ENCODE measurements at regions of chr1 and their contacts with region 1.

Region 1: GRCh38 chr1:154998818-154999570 is 3.6 kb upstream of the ZBTB7B start:
- DNase-seq: peak in 1 of 2 donors; percentile 51
- H3K4me3 ChIP-seq: peak overlapping the region in 1 of 3 donors; percentile 86
- H3K27ac ChIP-seq: peak overlapping the region in 2 of 3 donors; percentile 95 to 99
- H3K4me1 ChIP-seq: peaks cover 16 to 18% of the 10 kb centered on the region in 2 donors
- H3K27me3 ChIP-seq: no peaks in the 10 kb centered on the region
- CTCF ChIP-seq: peak; percentile 33 to 70 (median 63)
- POLR2A ChIP-seq: no peak

Region 2: DNA sequence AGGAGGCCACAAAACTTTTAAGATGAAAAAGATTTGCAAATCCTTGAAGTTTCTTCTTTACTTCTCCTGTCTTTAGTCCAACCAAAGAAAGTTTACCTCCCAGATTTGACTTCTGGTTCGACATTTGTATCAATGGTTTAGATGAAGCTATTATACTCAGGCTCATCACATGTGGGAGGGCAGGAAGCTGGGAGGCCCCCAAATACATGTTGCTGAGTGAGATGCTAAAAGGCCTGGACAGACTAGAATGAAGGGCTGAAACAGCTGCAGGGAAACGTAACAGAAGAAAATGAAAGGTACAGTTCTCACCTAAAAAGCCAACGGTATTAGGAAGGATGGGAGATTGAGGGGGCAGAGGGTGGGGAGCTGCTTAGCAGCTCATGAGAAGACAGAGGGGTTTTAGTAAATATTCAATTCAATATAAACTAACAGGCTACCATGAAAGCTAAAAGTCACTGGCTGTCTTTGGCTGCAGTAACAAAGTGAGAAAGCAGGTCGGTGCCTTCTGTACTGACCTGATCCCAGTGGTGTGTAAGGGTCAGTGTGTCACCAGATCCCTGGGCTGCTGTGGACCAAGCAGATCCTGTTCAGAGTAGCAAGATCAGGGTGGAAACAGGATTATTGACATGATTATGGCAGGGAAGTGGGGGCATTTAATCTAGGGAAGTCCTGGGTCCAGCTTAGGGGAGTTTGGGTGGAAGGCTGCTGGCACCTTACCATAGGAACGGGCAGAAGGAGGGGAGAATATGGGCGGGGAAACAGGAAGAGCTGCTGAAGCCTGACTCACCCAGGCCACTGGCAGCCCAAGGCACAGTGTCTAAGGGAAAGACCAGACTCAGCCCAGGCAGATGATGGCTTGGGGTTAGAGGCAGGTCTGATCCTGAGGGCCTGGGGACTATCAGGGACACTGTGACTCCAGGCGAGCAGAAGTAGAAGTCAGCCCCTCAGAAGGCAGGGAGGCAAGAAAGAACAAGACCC is 189.3 kb before region 1 on chr1:
- intact Hi-C with region 1: no loop called
- DNase-seq: peak in 1 of 2 donors; percentile 16
- H3K4me3 ChIP-seq: no peak overlapping the region
- H3K27ac ChIP-seq: peak overlapping the region in 2 of 3 donors; percentile 31 to 34
- H3K4me1 ChIP-seq: peaks cover 5 to 36% of the 10 kb centered on the region in 2 donors
- H3K27me3 ChIP-seq: no peaks in the 10 kb centered on the region
- CTCF ChIP-seq: no peak
- POLR2A ChIP-seq: no peak

Region 3: GRCh38 chr1:154863315-154864174 is 135.4 kb before region 1 on chr1:
- intact Hi-C with region 1: no loop called
- DNase-seq: peak; percentile 22 to 38
- H3K4me3 ChIP-seq: no peak overlapping the region
- H3K27ac ChIP-seq: peak overlapping the region in 1 of 3 donors; percentile 53
- H3K4me1 ChIP-seq: peaks cover 0 to 5% of the 10 kb centered on the region in 2 donors
- H3K27me3 ChIP-seq: no peaks in the 10 kb centered on the region
- CTCF ChIP-seq: peak; percentile 28 to 54 (median 32)
- POLR2A ChIP-seq: no peak

Region 4: DNA sequence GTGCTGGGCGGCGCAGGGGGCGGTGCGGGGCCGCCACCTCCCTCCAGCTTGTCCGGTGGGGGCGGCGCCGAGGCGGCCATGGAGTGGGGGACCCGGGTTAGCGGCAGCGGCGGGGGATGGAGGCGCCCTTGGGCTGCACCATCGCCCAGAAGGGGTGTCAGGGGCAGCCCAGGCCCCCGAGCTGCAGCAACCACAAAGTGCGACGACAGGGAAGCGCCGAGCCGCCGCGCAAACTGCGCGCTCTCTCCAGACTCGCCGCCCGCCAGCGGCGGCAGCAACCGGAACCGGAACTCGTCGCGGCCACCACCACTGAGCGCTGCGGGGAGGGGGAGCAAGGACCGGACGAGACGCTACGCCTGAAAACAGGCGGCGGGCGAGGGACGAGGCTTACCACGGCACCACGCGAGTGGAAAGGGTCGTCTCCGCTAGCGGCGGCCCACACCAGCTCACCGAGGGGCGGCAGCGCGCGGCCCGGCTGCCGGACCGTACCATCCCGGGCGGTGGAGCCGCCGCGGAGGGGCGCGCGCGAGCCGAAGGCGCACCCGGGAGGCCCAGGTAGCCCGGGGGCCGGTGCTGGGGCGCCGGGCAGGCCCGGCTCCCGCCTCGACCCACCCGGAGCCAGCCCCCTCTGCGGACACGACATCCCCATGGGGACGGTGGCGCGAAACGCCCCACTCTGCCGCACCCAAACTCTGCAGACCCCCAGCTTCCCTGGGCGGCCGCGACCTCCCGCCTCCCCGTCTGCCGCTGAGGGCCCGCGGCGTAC is 37.3 kb before region 1 on chr1 and contains the start of gene PYGO2:
- intact Hi-C with region 1: loop called (anchors 5 kb)
- DNase-seq: peak; percentile 82 to 86
- H3K4me3 ChIP-seq: peak within 1 kb of the TSS; percentile 30 to 91 (median 69)
- H3K27ac ChIP-seq: peak within 1 kb of the TSS; percentile 94 to 100 (median 97)
- H3K4me1 ChIP-seq: peaks cover 40 to 49% of the 10 kb centered on the region in 2 donors
- H3K27me3 ChIP-seq: no peaks in the 10 kb centered on the region
- CTCF ChIP-seq: peak in 4 of 6 experiments; percentile 36 to 86 (median 70)
- POLR2A ChIP-seq: peak in 1 of 2 donors; percentile 80
- total RNA-seq, gene PYGO2: 28.6 to 48.3 (median 42.9) TPM

Measured in thyroid gland (tissue), 4 donors.